ENCODE measurements at regions of chr4 and their contacts with region 1.

Region 1: DNA sequence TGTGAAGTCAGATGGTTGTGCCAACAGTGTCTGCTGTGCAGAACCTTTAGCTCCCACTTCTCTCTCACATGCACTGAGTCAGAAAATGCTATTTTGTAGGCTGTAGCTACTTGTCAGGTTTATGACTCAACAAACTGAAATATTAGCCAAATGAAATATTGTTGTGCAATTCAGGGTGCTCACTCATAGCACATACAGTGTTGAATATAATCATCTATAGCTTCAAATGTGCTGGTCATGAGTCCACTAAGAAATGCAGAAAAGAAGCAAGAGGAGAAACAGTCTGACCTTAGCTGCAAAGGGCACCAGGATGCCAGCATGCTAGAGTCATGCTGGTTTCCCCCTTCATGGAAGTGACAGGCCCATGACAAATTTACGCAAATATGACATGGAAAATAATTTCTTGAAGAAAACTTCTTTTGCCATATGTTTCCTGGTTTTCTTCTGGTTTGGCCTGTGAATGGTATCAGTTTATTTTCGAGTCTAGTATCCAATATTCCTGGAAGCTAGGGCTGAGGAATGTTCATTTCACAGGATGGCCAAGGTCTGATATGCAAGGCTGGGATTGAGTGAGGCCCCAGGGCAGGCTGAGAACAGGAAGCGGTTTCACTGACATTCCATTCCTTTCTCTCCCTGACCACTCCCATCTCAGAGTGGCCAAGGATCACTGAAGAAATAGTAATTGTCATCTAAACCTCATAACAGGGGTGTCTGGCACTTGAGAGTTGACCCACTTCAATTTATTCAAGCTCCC is 10.3 kb upstream of the CXCL2 start:
- DNase-seq: peak; percentile 96
- H3K4me3 Mint-ChIP-seq: peak overlapping the region; percentile 14
- H3K27ac Mint-ChIP-seq: peak overlapping the region; percentile 96
- H3K4me1 Mint-ChIP-seq: peaks cover 55% of the 10 kb centered on the region
- H3K27me3 Mint-ChIP-seq: no peaks in the 10 kb centered on the region
- CTCF ChIP-seq: no peak

Region 2: GRCh38 chr4:73853246-73853704 is 256.0 kb before region 1 on chr4 and contains the start of gene PF4V1:
- CTCF ChIA-PET with region 1: no interaction called
- POLR2A ChIA-PET with region 1: no interaction called
- intact Hi-C with region 1: no loop called
- DNase-seq: no peak
- H3K4me3 Mint-ChIP-seq: no peak within 1 kb of the TSS
- H3K27ac Mint-ChIP-seq: no peak within 1 kb of the TSS
- H3K4me1 Mint-ChIP-seq: peaks cover 9% of the 10 kb centered on the region
- H3K27me3 Mint-ChIP-seq: no peaks in the 10 kb centered on the region
- CTCF ChIP-seq: no peak
- total RNA-seq, gene PF4V1: not detected in 2 replicates

Region 3: GRCh38 chr4:73869130-73870050 is 239.9 kb before region 1 on chr4 and contains the start of gene CXCL1:
- CTCF ChIA-PET with region 1: interaction called, 11 read pairs
- POLR2A ChIA-PET with region 1: interaction called, 32 read pairs
- intact Hi-C with region 1: loop called (anchors 5 kb)
- DNase-seq: peak; percentile 74
- H3K4me3 Mint-ChIP-seq: peak within 1 kb of the TSS; percentile 95
- H3K27ac Mint-ChIP-seq: peak within 1 kb of the TSS; percentile 92
- H3K4me1 Mint-ChIP-seq: peaks cover 37% of the 10 kb centered on the region
- H3K27me3 Mint-ChIP-seq: no peaks in the 10 kb centered on the region
- CTCF ChIP-seq: no peak
- total RNA-seq, gene CXCL1: 35.0 and 49.3 TPM in 2 replicates

Region 4: DNA sequence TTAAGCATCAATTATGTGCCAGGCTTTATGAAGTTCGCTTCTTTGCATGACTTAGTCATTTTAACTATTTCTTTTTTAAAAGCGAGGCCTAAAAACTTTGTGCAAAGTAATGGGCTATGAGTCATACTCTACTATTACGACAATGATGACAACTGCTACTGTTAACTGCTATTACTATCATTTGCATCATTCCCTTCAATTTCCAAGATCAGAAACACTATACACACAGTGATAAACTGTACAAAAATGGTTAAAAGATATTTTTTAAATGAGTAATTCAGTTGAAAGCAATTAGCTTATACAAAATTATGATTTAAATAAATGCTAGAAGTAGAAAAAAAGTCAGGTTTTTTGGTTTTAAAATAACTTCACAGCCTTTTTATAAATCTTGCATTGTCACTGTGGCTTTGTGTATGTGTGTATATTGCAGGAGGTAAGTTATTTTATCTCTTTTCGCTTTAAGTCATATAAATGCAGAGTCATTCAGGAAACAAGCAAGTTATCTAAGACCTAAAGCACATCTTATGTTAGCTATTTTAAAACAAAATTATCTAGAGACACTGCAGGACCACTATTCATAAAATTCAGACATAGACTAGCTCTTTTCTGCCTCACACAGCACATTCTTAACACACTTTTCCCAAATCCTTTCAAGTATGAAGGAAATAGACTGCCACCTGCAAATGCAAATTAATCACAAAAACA is 52.3 kb before region 1 on chr4:
- CTCF ChIA-PET with region 1: interaction called, 3 read pairs
- POLR2A ChIA-PET with region 1: interaction called, 13 read pairs
- intact Hi-C with region 1: no loop called
- DNase-seq: peak; percentile 70
- H3K4me3 Mint-ChIP-seq: no peak overlapping the region
- H3K27ac Mint-ChIP-seq: peak overlapping the region; percentile 53
- H3K4me1 Mint-ChIP-seq: peaks cover 19% of the 10 kb centered on the region
- H3K27me3 Mint-ChIP-seq: no peaks in the 10 kb centered on the region
- CTCF ChIP-seq: no peak

Region 5: DNA sequence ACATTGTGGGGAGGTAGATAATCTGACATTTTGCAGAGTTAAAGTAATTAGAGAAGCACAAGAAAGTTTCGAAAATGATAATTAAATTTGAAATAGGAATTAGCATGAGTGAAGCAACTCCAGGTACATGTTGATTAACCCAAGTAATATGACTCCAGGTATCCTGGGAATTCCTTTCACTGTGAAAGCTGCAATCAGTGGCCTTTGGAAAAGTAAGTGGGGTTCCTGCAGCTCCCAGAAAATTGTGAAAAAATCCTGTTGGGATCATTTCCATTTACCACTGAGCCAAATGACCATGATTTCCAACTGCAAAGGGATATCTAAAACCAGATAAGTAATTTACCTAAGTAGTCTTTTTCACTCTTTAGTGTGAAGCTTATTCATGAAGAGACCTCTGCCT is 15.8 kb after region 1 on chr4:
- CTCF ChIA-PET with region 1: interaction called, 3 read pairs
- POLR2A ChIA-PET with region 1: interaction called, 92 read pairs
- intact Hi-C with region 1: no loop called
- DNase-seq: no peak
- H3K4me3 Mint-ChIP-seq: peak overlapping the region; percentile 19
- H3K27ac Mint-ChIP-seq: no peak overlapping the region
- H3K4me1 Mint-ChIP-seq: peaks cover 23% of the 10 kb centered on the region
- H3K27me3 Mint-ChIP-seq: no peaks in the 10 kb centered on the region
- CTCF ChIP-seq: no peak

Region 6: DNA sequence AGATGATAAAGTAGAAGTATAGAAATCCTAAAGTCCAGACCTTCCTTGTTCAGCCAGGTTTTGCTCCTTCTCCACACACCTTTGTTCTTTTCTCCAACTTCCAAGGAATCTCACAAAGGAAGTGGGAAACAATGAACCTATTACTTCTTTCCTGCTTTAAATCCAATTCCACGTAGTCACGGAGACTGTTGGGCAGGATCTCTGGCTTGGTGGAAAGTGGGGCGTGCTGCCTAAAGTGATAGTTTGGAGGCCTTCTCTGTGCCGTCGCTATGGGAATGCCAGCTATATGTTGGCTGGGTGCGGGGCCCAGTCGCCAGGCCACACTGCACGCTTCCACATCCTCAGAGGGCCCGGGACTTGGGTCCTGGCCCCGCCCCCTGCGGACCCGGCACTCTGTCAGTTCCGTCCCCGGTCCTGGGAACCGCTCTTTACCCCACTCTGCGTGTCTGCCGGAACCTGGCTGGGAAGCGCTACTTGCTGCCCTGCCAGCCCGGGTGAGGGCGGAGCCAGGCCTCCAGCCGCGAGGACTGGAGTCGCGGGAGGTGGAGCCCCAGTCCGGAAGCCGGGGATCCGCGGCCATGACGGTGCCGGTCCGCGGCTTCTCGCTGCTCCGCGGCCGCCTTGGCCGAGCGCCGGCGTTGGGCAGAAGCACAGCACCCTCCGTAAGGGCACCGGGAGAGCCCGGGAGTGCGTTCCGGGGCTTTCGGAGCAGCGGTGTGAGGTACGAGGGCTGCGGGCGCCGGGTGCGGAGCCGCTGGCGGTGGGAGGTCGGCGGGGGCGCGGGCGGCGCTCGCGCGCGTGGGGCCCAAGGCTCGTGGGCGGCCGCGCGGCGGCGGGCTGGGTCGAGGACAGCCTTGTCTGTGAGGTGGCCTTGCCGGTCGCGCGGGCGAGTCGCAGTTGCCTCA is 48.5 kb after region 1 on chr4 and contains the start of gene MTHFD2L:
- CTCF ChIA-PET with region 1: interaction called, 3 read pairs
- POLR2A ChIA-PET with region 1: interaction called, 206 read pairs
- intact Hi-C with region 1: loop called (anchors 2 kb)
- DNase-seq: peak; percentile 95
- H3K4me3 Mint-ChIP-seq: peak within 1 kb of the TSS; percentile 91
- H3K27ac Mint-ChIP-seq: peak within 1 kb of the TSS; percentile 94
- H3K4me1 Mint-ChIP-seq: peaks cover 33% of the 10 kb centered on the region
- H3K27me3 Mint-ChIP-seq: no peaks in the 10 kb centered on the region
- CTCF ChIP-seq: no peak
- total RNA-seq, gene MTHFD2L: 110 and 113 TPM in 2 replicates

Measured in MCF 10A (cell line).